ENCODE measurements at regions of chr11 and their contacts with region 1.

Region 1: GRCh38 chr11:103682318-103683184 is 353.9 kb upstream of the DDI1 start:
- DNase-seq: peak; percentile 46
- ATAC-seq: peak; percentile 98

Region 2: DNA sequence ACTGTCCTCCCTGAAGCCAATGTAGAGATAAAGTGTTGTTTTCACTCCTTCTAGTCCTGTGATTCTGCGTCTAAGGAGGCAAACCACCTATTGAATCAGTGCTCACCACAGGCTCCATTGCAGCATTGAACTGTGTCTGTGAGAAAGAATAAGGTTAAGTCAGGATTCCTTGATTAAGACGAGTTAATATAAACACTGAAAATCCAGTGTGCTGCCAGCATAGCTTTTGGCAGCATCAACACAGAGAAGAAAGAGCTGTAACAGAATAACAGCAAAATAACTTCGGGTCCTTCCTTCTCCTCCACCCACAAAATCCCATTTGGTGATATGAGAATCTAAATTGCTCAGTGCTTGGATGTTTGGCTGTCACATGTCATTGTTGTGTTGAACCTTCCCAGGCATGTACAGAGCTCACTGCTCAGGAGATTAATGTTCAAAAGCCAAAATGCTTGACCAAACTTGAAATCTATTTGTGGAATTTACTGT is 168.7 kb after region 1 on chr11:
- intact Hi-C with region 1: no loop called
- DNase-seq: no peak
- ATAC-seq: peak; percentile 72

Region 3: DNA sequence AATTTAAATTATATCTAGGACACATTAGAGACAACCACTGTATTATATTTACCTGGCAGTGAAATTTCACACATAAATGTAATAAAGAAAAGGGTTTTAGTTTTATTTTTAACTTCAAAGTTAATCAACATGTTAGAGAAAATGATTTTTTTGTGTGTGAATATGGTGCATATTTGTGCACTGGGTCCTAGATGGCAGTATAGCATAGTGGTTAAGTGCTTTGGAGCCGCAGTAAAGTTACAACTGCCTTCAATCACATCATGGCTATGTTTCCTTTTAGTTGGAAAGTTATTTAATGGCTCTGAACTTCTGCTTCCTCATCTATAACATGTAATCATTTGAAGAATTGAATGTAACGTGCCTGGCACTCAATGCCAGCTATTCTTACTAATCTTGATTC is 245.0 kb after region 1 on chr11:
- intact Hi-C with region 1: loop called (anchors 10 kb)
- DNase-seq: no peak
- ATAC-seq: peak; percentile 78

Region 4: DNA sequence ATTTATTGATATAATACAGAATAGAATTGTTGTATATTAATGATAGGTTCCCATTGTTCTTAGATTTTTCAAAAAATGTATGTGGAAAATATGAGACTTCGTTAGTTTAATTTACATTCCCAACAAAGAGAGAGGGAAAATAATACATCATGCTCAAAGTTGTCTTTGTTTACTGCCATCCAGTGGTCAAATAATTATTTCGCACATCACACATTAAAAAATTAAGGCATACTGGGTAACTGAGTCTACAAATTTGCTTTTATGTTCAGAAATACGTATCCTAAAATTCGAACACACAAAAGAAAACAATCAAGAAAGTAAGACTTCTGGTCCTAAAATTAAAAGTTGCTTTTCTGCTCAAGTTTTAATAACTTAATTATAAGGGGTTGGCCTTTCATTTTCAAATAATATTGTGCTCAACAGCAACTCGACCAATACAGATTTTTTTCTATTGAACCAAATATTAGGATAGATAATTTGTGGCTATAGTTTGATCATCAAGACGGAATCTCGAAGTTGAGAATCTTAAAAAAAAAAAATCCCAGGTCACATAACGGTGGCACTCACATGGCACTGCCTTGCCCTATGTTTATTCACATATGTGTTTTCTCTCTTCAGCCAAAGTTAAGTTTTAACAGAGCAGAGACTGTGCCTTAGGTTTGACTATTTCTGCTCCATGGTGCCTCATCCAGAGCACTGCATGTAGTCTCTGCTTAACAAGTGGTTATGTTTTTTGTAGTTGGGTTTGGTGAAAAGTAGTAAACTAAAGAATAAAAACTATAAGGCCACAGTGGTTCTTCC is 469.1 kb after region 1 on chr11:
- intact Hi-C with region 1: loop called (anchors 5 kb)
- DNase-seq: no peak
- ATAC-seq: no peak